Activated CD4-positive, alpha-beta T cell treated with anti-CD3 and anti-CD28 coated beads, Interleukin-2, amount 10 ng/mL, durations not matched to agents 24 days and 14 days (primary cell): ENCODE measurements at regions of chr5 and their contacts with region 1.

Region 1: GRCh38 chr5:177351385-177352329 is at the start of gene LMAN2:
- DNase-seq: peak; percentile 97
- H3K4me3 Mint-ChIP-seq: peak within 1 kb of the TSS; percentile 90
- H3K27ac Mint-ChIP-seq: peak within 1 kb of the TSS; percentile 100
- H3K4me1 Mint-ChIP-seq: peaks cover 48% of the 10 kb centered on the region
- H3K27me3 Mint-ChIP-seq: no peaks in the 10 kb centered on the region
- total RNA-seq, gene LMAN2: 105 and 108 TPM in 2 replicates

Region 2: GRCh38 chr5:177311723-177312648 is 39.7 kb before region 1 on chr5 and contains the start of gene MXD3:
- intact Hi-C with region 1: loop called (anchors 1 kb)
- DNase-seq: peak; percentile 99
- H3K4me3 Mint-ChIP-seq: peak within 1 kb of the TSS; percentile 85
- H3K27ac Mint-ChIP-seq: peak within 1 kb of the TSS; percentile 93
- H3K4me1 Mint-ChIP-seq: peaks cover 31% of the 10 kb centered on the region
- H3K27me3 Mint-ChIP-seq: no peaks in the 10 kb centered on the region
- total RNA-seq, gene MXD3: 9.1 and 11.7 TPM in 2 replicates

Region 3: DNA sequence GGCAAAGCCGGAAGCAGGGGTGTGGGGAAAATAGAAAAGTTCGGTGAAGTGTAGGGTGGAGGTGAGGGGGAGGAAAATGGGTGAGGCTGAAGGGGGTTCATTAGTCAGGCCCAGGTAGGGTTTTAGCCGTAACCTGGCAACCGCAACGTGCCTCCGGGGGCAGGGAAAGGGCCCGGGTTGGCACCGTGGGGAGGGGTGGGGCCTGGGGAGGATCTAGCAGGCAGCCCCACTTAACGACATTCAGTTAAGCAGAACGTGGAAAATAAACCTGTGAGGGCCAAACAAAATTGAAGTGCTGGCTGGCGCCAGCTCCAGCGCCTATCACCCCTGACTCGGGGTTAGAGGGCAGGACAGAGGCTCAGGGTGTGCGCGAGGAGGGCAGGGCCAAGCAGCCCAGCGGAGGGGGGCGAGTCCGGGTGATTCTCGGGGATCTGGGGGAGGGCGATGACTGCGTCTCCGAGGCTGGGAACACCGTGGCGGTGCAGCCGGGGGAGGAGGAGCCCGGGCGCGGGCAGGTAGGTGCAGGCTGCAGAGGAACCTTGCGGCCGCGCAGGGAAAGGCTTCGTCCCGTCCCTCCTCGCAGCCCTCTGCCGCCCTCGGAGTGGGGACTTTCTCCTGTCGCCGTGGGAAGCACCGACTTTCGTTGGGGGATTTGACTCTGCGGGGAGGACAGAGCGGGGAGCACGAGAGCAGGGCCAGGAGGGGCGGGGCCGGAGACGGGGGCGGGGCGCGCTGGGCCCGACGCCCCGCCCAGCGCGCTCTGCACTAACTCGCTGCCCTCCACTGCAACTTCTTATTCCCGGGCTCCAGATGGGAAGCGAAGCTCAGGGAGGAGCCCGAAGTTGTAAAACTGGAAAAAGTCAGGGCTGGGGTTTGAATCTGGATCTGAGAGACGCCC is 11.2 kb after region 1 on chr5:
- intact Hi-C with region 1: loop called (anchors 1 kb)
- DNase-seq: peak; percentile 87
- H3K4me3 Mint-ChIP-seq: peak overlapping the region; percentile 81
- H3K27ac Mint-ChIP-seq: peak overlapping the region; percentile 72
- H3K4me1 Mint-ChIP-seq: peaks cover 59% of the 10 kb centered on the region
- H3K27me3 Mint-ChIP-seq: no peaks in the 10 kb centered on the region